Thyroid gland (tissue), 4 donors: ENCODE measurements at regions of chr19 and their contacts with region 1.

Region 1: DNA sequence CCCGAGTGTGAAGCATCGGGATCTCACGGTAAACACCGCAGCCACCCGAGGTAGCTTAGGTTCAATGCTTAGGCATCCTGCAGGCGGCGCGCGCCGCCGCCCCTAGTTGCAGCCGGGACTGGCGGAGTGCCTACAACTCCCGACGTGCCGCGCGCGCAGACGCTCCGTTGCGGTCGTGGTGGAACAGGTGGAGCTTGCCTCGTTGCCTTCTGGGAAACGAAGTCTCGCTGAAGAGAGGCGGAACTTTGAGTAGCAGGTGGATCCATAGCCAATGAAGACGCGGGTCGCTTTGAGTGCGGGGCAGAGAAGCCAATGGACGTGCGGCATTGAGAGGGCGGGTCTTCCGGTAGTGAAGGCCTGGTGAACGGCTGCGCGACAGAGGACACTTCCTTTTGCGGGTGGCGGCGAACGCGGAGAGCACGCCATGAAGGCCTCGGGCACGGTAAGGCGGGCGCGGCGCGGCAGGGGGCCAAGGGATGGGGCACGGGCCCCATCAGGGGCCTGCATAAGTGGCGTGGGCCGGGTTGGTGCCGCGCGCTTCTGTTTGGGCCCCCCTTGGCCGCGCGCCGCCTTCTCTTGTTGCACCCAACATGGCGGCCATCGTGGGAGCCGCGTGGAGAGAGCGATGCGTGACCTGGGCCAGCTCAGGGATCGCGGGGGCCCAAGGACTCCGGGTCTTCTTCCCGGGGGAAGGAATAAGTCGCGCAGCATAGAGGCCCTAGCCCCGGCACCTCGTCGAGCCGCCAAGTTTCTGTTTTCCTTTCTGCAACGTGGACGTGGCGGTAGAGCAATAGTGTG is at the start of gene RPL18A:
- DNase-seq: peak; percentile 99
- H3K4me3 ChIP-seq: peak within 1 kb of the TSS; percentile 55 to 92 (median 80)
- H3K27ac ChIP-seq: peak within 1 kb of the TSS; percentile 72 to 94 (median 84)
- H3K4me1 ChIP-seq: peaks cover 42 to 43% of the 10 kb centered on the region in 2 donors
- H3K27me3 ChIP-seq: no peaks in the 10 kb centered on the region
- CTCF ChIP-seq: peak; percentile 21 to 97 (median 83)
- POLR2A ChIP-seq: peak; percentile 80 to 97
- total RNA-seq, gene RPL18A: 718 to 1,678 (median 1,197) TPM

Region 2: DNA sequence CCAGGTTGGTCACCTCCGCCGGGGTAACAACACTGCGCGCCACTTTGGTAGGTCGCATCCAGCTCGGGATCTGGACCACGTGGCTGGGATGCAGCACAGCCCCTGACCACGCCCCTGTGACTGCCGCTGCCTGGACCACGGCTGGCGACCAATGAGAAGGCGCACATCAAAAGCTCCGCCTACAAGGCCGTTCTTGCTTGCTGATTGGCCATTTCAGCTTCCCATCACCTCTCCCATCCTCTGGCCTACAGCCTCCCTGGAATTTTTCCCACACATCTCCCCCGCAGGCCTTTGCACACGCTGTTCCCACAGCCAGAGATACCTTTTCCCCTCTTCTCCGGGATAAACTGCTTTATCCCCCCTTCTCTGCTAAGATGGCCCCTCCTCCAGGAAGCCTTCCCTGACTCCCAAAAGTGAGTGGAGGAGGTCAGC is 153.0 kb before region 1 on chr19:
- intact Hi-C with region 1: loop called (anchors 5 kb)
- DNase-seq: no peak
- H3K4me3 ChIP-seq: no peak overlapping the region
- H3K27ac ChIP-seq: no peak overlapping the region
- H3K4me1 ChIP-seq: no peaks in the 10 kb centered on the region
- H3K27me3 ChIP-seq: no peaks in the 10 kb centered on the region
- CTCF ChIP-seq: no peak
- POLR2A ChIP-seq: no peak

Region 3: DNA sequence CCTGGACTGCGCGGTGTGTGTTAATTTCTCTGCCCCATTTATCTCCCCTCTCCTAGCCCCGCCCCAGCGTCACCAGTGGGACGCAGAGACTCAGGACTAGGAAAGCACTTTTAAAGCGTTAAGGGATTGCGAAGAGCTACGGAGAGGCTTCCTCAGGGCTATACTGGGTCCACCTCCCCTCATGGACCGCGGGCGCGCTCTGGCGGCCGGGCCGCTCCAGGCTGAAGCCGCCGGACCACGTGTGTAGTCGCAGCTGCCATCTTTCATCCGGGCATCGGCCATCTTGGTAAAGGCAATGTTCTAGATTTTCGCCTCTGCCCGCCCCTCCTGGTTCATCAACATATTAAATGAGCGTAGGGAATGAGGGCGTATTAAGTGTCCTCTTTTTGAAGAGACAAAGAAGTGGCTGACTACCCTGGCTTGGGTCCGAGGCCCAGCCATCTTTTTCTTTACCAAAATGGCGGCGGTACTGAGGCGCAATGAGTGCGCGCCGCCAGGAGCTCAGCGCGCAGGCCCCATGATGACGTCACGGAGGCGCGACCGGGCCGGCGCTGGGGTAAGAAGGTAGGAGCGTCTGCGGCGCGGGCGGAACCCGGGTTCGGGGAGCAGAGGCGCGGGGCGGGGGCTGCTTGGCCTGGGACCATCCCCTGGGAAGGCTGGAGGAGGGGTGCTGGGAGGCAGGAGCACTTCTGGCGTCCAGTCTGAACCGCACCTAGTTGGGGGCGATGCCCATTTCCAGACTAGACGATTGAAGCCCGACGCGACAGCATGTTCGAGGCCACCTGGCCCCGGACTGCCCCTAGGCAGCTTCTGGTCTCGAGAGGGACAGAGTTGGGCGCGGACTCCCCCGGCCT is 73.0 kb after region 1 on chr19 and contains the start of gene CCDC124:
- intact Hi-C with region 1: loop called (anchors 2 kb)
- DNase-seq: peak; percentile 90 to 91
- H3K4me3 ChIP-seq: peak within 1 kb of the TSS; percentile 59 to 75 (median 65)
- H3K27ac ChIP-seq: peak within 1 kb of the TSS; percentile 84 to 95 (median 94)
- H3K4me1 ChIP-seq: peaks cover 11 to 16% of the 10 kb centered on the region in 2 donors
- H3K27me3 ChIP-seq: no peaks in the 10 kb centered on the region
- CTCF ChIP-seq: peak; percentile 58 to 98 (median 92)
- POLR2A ChIP-seq: peak; percentile 25 to 79
- total RNA-seq, gene CCDC124: 35.7 to 65.6 (median 51.9) TPM

Region 4: DNA sequence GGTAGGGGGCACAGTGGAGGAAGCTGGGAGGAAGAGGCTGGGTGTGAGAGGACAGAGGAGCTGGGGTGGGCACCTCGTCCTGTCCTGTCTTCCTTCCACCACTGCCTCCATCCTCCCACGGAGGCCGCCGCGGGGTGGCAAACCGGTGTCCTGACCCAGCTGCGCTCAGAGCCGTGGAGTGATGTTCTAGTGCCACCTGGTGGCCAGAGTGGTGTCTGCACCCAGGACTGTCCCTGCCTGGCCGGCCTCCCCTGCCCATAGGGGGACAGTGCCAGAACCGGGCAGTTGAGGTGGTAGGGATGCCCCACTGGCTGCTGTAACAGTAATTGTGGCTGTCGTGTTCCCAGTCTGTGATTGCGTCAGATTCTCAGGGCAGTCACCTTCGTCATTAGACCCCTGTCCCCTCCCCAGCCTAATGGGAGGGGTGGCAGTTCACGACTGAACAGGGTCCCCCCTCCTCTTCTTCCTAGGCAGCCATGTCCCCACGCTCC is 137.1 kb after region 1 on chr19:
- intact Hi-C with region 1: loop called (anchors 5 kb)
- DNase-seq: peak; percentile 80 to 83
- H3K4me3 ChIP-seq: no peak overlapping the region
- H3K27ac ChIP-seq: no peak overlapping the region
- H3K4me1 ChIP-seq: peaks cover 4 to 9% of the 10 kb centered on the region in 2 donors
- H3K27me3 ChIP-seq: no peaks in the 10 kb centered on the region
- CTCF ChIP-seq: peak; percentile 94 to 99 (median 96)
- POLR2A ChIP-seq: no peak

Region 5: GRCh38 chr19:18058208-18059030 is 198.7 kb after region 1 on chr19:
- intact Hi-C with region 1: loop called (anchors 5 kb)
- DNase-seq: peak; percentile 72 to 81
- H3K4me3 ChIP-seq: no peak overlapping the region
- H3K27ac ChIP-seq: peak overlapping the region; percentile 82 to 86 (median 85)
- H3K4me1 ChIP-seq: peaks cover 7 to 14% of the 10 kb centered on the region in 2 donors
- H3K27me3 ChIP-seq: no peaks in the 10 kb centered on the region
- CTCF ChIP-seq: peak; percentile 89 to 98 (median 95)
- POLR2A ChIP-seq: no peak